ENCODE measurements at regions of chr17 and their contacts with region 1.

Region 1: GRCh38 chr17:8057691-8058114 is 18.8 kb downstream of the ALOX15B start:
- H3K4me3 ChIP-seq: no peak overlapping the region
- H3K27ac ChIP-seq: no peak overlapping the region
- H3K4me1 ChIP-seq: peaks cover 5% of the 10 kb centered on the region; the same call in 1 of the 2 replicates
- CTCF ChIP-seq: peak; percentile 73

Region 2: GRCh38 chr17:7856883-7857723 is 200.6 kb before region 1 on chr17 and contains the start of gene NAA38:
- CTCF ChIA-PET with region 1: interaction called, 50 read pairs
- POLR2A ChIA-PET with region 1: no interaction called
- H3K4me3 ChIP-seq: peak within 1 kb of the TSS; percentile 88
- H3K27ac ChIP-seq: peak within 1 kb of the TSS; percentile 90
- H3K4me1 ChIP-seq: peaks cover 8% of the 10 kb centered on the region; the same call in 1 of the 2 replicates
- CTCF ChIP-seq: peak; percentile 97

Region 3: DNA sequence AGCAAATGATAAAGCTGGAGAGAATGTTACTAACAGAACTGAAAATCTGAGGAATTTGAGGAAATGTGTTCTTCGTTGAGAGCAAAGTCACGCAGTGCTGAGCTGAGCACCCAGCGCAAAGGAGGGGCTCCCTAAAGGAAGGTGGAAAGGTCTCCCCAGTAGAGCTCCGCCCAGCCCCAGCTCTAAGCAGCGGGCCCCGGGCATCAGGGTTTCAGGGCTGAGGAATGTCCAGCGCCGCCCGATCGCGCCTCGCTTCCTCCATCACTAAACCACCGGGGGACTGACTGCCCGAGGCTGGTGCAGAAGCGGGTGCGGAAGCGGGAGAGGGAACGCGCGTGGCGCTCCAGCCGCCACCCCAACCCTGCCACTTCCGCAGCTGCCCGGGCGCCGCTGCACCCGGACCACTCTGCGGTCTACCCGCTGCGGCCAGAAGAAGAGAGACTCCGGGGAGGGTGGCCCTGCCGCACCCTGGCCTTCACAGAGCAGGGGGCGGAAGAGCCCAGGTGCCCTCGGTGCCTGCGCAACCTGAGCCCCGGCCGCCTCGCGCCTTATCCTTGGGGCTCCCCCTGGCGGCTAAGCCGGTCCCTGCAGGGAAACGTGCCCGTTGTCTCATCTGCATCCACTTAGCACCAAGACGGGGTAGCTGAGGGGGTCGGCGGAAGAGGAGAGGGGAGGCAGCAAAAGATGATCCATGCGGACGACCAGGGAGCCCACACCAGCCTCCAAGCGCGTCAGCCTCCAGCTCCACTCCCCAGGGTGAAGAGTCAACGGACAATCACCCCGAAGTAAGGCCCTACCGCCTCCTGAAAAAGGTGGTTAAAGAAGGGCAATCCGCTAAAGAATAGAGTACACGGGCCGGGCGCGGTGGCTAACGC is 67.7 kb before region 1 on chr17:
- CTCF ChIA-PET with region 1: interaction called, 21 read pairs
- POLR2A ChIA-PET with region 1: interaction called, 4 read pairs
- H3K4me3 ChIP-seq: peak overlapping the region; percentile 59
- H3K27ac ChIP-seq: peak overlapping the region; percentile 29; the same call in 1 of the 2 replicates
- H3K4me1 ChIP-seq: no peaks in the 10 kb centered on the region
- CTCF ChIP-seq: peak; percentile 98

Region 4: DNA sequence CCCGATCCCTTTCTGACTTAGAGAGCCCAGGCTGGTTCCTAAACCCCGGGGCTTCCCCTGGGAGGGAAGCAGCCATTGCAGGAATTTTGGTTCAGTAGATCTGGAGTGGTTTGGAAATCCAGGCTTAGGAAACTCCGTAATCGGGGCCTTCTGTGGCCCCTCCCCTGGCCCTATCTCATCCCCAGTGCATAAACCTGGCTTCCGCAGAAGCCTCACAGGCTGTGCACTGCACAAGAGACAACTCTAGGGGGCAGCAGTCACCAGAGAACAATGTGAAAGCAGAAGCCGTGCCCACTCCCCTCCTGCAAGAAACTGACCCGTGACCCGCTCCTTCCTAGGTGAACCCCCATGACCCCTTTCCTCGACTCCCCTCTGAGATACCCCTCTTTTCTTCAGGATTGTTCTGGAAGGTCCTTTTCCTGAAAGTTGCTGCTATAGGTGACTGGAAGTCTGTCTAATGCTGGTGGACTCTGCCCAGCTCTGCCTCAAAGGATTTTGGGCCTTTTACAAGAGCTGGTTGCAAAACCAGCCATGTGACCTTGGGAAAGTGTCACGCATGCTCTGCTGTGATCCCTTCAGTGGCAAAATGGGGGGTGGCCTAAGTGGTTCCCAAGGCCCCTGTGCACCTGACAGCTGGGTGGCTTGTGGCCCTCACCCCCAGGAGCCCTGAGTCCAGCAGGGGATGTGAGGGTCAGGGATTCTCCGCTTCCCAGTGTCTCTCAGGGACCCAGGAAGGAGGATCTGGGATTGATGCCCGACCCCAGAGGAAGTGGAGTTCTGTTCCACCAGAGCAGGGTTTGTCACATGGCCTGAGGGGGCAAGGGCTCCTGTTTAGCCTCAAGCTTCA is 40.8 kb before region 1 on chr17:
- CTCF ChIA-PET with region 1: interaction called, 38 read pairs
- POLR2A ChIA-PET with region 1: no interaction called
- H3K4me3 ChIP-seq: peak overlapping the region; percentile 40
- H3K27ac ChIP-seq: peak overlapping the region; percentile 49; the same call in 1 of the 2 replicates
- H3K4me1 ChIP-seq: no peaks in the 10 kb centered on the region
- CTCF ChIP-seq: peak; percentile 88

Region 5: GRCh38 chr17:8073627-8074484 is 16.2 kb after region 1 on chr17:
- CTCF ChIA-PET with region 1: interaction called, 214 read pairs
- POLR2A ChIA-PET with region 1: interaction called, 6 read pairs
- H3K4me3 ChIP-seq: peak overlapping the region; percentile 28
- H3K27ac ChIP-seq: no peak overlapping the region
- H3K4me1 ChIP-seq: no peaks in the 10 kb centered on the region
- CTCF ChIP-seq: peak; percentile 92

Region 6: DNA sequence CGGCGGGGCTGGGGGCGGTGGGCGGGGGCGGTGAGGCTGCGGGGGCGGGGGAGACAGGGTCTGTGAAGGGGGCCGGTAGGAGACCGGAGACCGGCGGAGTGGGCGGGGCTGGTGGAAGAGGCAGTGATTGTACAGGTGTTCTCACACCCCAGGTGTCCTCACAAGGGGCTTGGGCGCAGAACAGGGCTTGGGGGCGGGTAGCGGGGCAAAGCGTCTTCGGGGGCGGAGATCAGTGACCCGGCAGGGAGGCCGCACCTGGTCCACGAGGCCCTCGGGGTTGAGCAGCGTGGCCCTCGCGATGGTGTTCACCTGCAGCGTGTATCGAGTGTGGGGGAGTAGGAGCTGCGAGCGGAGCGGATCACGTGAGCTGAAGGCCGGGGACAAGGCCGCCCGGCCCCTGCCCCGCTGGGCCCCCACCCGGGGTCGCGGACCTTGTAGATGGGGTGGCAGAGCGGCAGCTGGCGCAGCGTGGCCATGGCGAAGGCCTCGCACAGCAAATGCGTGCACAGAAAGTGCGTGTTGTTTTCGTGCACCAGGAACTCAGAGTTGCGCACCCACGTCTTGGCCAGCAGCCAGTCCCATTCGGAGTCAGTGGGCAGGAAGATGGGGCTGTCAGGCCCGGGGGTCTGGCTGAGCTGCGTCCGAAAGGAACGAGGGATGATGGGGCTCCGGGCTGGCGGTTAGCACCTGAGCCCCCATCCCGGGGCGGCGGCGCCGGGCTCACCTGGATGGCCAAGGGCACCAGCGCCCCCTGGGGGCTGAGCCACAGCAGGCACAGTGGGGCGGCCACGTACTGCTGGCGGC is 52.2 kb after region 1 on chr17:
- CTCF ChIA-PET with region 1: interaction called, 86 read pairs
- POLR2A ChIA-PET with region 1: no interaction called
- H3K4me3 ChIP-seq: peak overlapping the region; percentile 18
- H3K27ac ChIP-seq: no peak overlapping the region
- H3K4me1 ChIP-seq: no peaks in the 10 kb centered on the region
- CTCF ChIP-seq: peak; percentile 55

Region 7: GRCh38 chr17:8997994-8998628 is 940.4 kb after region 1 on chr17:
- CTCF ChIA-PET with region 1: interaction called, 11 read pairs
- POLR2A ChIA-PET with region 1: no interaction called
- H3K4me3 ChIP-seq: no peak overlapping the region
- H3K27ac ChIP-seq: no peak overlapping the region
- H3K4me1 ChIP-seq: peaks cover 5% of the 10 kb centered on the region; the same call in 1 of the 2 replicates
- CTCF ChIP-seq: peak; percentile 77

Measured in HEK293 (cell line).